Heart right ventricle (tissue), 16 donors: ENCODE measurements at regions of chr15 and their contacts with region 1.

Region 1: GRCh38 chr15:85485956-85486567 is 105.7 kb downstream of the AKAP13 start:
- DNase-seq: peak in 1 of 2 donors; percentile 67
- ATAC-seq: peak; percentile 54 to 83 (median 76)
- H3K4me3 ChIP-seq: no peak overlapping the region
- H3K27ac ChIP-seq: peak overlapping the region in 1 of 10 donors; percentile 0
- H3K4me1 ChIP-seq: peaks cover 0 to 76% (median 51%) of the 10 kb centered on the region in 9 donors
- H3K27me3 ChIP-seq: no peaks in the 10 kb centered on the region
- CTCF ChIP-seq: peak; percentile 63 to 91 (median 82)

Region 2: GRCh38 chr15:85554852-85555521 is 68.9 kb after region 1 on chr15:
- intact Hi-C with region 1: loop called in 1 of 10 experiments (anchors 10 kb)
- DNase-seq: no peak
- ATAC-seq: peak in 7 of 8 donors; percentile 10 to 48 (median 28)
- H3K4me3 ChIP-seq: peak overlapping the region in 2 of 10 donors; percentile 1 to 44
- H3K27ac ChIP-seq: peak overlapping the region in 2 of 10 donors; percentile 18 to 77
- H3K4me1 ChIP-seq: peaks cover 0 to 83% (median 26%) of the 10 kb centered on the region in 9 donors
- H3K27me3 ChIP-seq: no peaks in the 10 kb centered on the region
- CTCF ChIP-seq: no peak